ENCODE measurements at regions of chr9 and their contacts with region 1.

Region 1: GRCh38 chr9:35657546-35658136 is at the start of gene RMRP:
- DNase-seq: peak; percentile 81
- ATAC-seq: peak; percentile 81
- H3K4me3 Mint-ChIP-seq: peak within 1 kb of the TSS; percentile 88
- H3K27ac Mint-ChIP-seq: peak within 1 kb of the TSS; percentile 99
- H3K4me1 Mint-ChIP-seq: peaks cover 78% of the 10 kb centered on the region
- H3K27me3 Mint-ChIP-seq: peaks cover 5% of the 10 kb centered on the region
- CTCF ChIP-seq: no peak
- total RNA-seq, gene RMRP: 8,247 and 9,516 TPM in 2 replicates

Region 2: GRCh38 chr9:35495984-35496383 is 161.7 kb before region 1 on chr9:
- CTCF ChIA-PET with region 1: no interaction called
- POLR2A ChIA-PET with region 1: no interaction called
- intact Hi-C with region 1: no loop called
- DNase-seq: no peak
- ATAC-seq: no peak
- H3K4me3 Mint-ChIP-seq: no peak overlapping the region
- H3K27ac Mint-ChIP-seq: no peak overlapping the region
- H3K4me1 Mint-ChIP-seq: no peaks in the 10 kb centered on the region
- H3K27me3 Mint-ChIP-seq: peaks cover 9% of the 10 kb centered on the region
- CTCF ChIP-seq: no peak

Region 3: DNA sequence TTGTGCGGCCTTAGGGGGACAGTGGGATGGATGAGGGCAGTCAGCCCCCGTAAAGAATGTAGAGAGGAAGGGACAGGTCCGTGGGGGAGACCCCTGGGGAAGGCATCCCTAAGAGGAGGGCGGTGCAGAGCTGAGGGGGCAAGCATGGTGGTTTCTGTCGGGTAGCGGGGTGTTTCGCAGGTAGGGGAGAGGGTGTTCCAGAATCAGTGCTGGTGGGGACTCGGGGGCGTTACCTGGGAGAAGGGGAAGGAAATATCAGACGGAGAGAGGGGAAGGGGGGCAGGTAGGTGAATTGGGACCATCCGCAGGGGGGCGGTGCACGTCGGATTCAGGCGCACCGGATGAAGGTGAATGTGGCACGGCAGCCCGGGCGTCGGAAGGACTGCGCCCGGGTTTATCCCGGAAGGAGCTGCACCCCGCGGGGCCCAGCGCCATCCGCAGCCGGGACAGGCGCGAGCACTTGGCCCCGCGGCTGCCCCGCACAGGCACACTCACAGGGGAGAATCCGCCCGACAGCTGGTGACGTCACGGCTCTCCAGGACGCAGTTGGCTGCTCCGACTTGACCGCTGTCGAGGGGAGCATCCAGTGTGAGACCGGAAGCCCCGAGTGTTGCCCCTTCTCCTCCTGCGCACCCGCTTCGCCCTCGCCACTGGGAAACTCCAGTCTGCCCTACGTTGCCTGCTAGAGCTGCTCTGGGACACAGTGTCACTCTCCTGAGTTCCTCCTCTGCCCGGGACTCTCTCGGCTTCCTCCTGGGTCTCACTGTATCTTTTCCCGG is 40.8 kb before region 1 on chr9:
- CTCF ChIA-PET with region 1: interaction called, 127 read pairs
- POLR2A ChIA-PET with region 1: interaction called, 549 read pairs
- intact Hi-C with region 1: loop called (anchors 1 kb)
- DNase-seq: peak; percentile 64
- ATAC-seq: peak; percentile 8
- H3K4me3 Mint-ChIP-seq: peak overlapping the region; percentile 87
- H3K27ac Mint-ChIP-seq: peak overlapping the region; percentile 97
- H3K4me1 Mint-ChIP-seq: peaks cover 98% of the 10 kb centered on the region
- H3K27me3 Mint-ChIP-seq: no peaks in the 10 kb centered on the region
- CTCF ChIP-seq: no peak

Region 4: GRCh38 chr9:35675732-35676392 is 18.2 kb after region 1 on chr9:
- CTCF ChIA-PET with region 1: interaction called, 7 read pairs
- POLR2A ChIA-PET with region 1: interaction called, 3 read pairs
- intact Hi-C with region 1: loop called (anchors 2 kb)
- DNase-seq: peak; percentile 47
- ATAC-seq: peak; percentile 74
- H3K4me3 Mint-ChIP-seq: peak overlapping the region; percentile 75
- H3K27ac Mint-ChIP-seq: no peak overlapping the region
- H3K4me1 Mint-ChIP-seq: peaks cover 31% of the 10 kb centered on the region
- H3K27me3 Mint-ChIP-seq: peaks cover 8% of the 10 kb centered on the region
- CTCF ChIP-seq: no peak

Region 5: GRCh38 chr9:35716230-35716629 is 58.6 kb after region 1 on chr9:
- CTCF ChIA-PET with region 1: interaction called, 3 read pairs
- POLR2A ChIA-PET with region 1: interaction called, 5 read pairs
- intact Hi-C with region 1: loop called (anchors 1 kb)
- DNase-seq: no peak
- ATAC-seq: no peak
- H3K4me3 Mint-ChIP-seq: no peak overlapping the region
- H3K27ac Mint-ChIP-seq: no peak overlapping the region
- H3K4me1 Mint-ChIP-seq: peaks cover 26% of the 10 kb centered on the region
- H3K27me3 Mint-ChIP-seq: no peaks in the 10 kb centered on the region
- CTCF ChIP-seq: no peak